K562 (cell line): ENCODE measurements at regions of chr3 and their contacts with region 1.

Region 1: DNA sequence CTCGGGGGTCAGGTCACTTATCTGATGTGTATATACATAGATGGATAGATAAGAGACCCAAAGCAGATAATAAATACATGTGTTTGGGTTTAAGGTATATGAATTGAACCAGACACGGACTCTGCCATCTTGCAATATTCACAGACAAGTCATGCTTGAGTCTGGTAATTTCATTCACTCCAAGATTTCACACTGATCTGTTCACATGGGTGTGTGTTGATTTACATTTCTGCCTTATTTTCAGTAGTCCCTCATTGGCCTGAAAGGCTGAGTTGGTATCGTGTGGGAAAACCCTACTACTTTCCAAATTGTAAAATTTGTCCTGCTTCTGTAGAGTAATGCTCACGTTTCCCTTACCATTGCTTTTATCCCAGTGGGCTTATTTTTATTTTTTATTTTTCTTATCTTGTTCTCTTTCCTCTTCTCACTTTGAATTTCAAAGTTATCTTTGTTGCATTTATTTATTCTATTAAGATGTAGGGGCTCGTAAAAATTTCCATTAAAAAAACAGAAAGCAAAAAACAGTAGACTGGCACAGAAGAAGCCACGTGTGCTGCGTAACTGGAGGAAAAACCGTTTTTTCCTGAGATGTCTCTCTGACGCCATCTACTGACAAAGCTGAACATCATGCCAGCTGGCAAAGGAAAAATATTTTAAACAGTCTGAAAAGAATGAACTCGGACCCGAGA is 10.8 kb upstream of the MFSD1 start:
- DNase-seq: peak; percentile 45 to 78 (median 52)
- ATAC-seq: peak; percentile 69
- H3K4me3 ChIP-seq: no peak overlapping the region
- H3K27ac ChIP-seq: peak overlapping the region; percentile 55; the same call in 2 of the 3 replicates
- H3K4me1 ChIP-seq: peaks cover 0 to 7% of the 10 kb centered on the region in 2 experiments; a peak in 2 of 5 replicates
- H3K27me3 ChIP-seq: no peaks in the 10 kb centered on the region
- CTCF ChIP-seq: peak; percentile 75 to 90 (median 77)
- EP300 ChIP-seq: peak; percentile 19; the same call in 1 of the 2 replicates
- POLR2A ChIP-seq: no peak
- RAD21 ChIP-seq: peak; percentile 82 to 86

Region 2: GRCh38 chr3:157532529-157533297 is 1258.3 kb before region 1 on chr3:
- CTCF ChIA-PET with region 1: no interaction called
- POLR2A ChIA-PET with region 1: no interaction called
- in situ Hi-C with region 1: no loop called
- intact Hi-C with region 1: loop called (anchors 10 kb)
- DNase-seq: peak; percentile 54 to 85 (median 63)
- ATAC-seq: peak; percentile 87
- H3K4me3 ChIP-seq: no peak overlapping the region
- H3K27ac ChIP-seq: peak overlapping the region; percentile 61
- H3K4me1 ChIP-seq: peaks cover 0 to 55% of the 10 kb centered on the region in 2 experiments; a peak in 4 of 5 replicates
- H3K27me3 ChIP-seq: no peaks in the 10 kb centered on the region
- CTCF ChIP-seq: peak; percentile 72 to 87 (median 72)
- EP300 ChIP-seq: peak; percentile 9; the same call in 1 of the 2 replicates
- POLR2A ChIP-seq: no peak
- RAD21 ChIP-seq: peak; percentile 92

Region 3: GRCh38 chr3:157865352-157866000 is 925.6 kb before region 1 on chr3:
- CTCF ChIA-PET with region 1: interaction called, 3 read pairs
- POLR2A ChIA-PET with region 1: no interaction called
- in situ Hi-C with region 1: no loop called
- intact Hi-C with region 1: loop called (anchors 2 kb)
- DNase-seq: peak; percentile 71 to 80 (median 76)
- ATAC-seq: peak; percentile 100
- H3K4me3 ChIP-seq: no peak overlapping the region
- H3K27ac ChIP-seq: no peak overlapping the region
- H3K4me1 ChIP-seq: no peaks in the 10 kb centered on the region
- H3K27me3 ChIP-seq: no peaks in the 10 kb centered on the region
- CTCF ChIP-seq: peak; percentile 80 to 94 (median 89)
- EP300 ChIP-seq: no peak
- POLR2A ChIP-seq: no peak
- RAD21 ChIP-seq: peak; percentile 93 to 94

Region 4: DNA sequence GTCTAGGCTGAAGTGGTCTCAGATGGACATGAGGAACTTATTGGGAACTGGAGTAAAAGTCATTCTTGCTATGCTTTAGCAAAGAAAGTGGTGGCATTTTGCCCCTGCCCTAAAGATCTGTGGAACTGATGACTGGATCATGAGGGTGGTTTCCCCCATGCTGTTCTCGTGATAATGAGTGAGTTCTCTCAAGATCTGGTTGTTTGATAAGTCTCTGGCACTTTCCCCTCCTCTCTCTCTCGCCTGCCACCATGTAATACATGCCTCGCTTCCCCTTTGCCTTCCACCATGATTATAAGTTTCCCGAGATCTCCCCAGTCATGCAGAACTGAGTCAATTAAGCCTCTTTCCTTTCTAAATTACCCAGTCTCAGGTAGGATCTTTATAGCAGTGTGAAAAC is 231.5 kb before region 1 on chr3:
- CTCF ChIA-PET with region 1: no interaction called
- POLR2A ChIA-PET with region 1: no interaction called
- in situ Hi-C with region 1: loop called (anchors 10 kb)
- intact Hi-C with region 1: no loop called
- DNase-seq: no peak
- ATAC-seq: no peak
- H3K4me3 ChIP-seq: no peak overlapping the region
- H3K27ac ChIP-seq: no peak overlapping the region
- H3K4me1 ChIP-seq: no peaks in the 10 kb centered on the region; a peak in 1 of 5 replicates
- H3K27me3 ChIP-seq: no peaks in the 10 kb centered on the region
- CTCF ChIP-seq: no peak
- EP300 ChIP-seq: no peak
- POLR2A ChIP-seq: no peak
- RAD21 ChIP-seq: no peak

Region 5: GRCh38 chr3:158679547-158680000 is 111.5 kb before region 1 on chr3:
- CTCF ChIA-PET with region 1: no interaction called
- POLR2A ChIA-PET with region 1: interaction called, 3 read pairs
- in situ Hi-C with region 1: no loop called
- intact Hi-C with region 1: loop called (anchors 5 kb)
- DNase-seq: peak; percentile 31 to 85 (median 54)
- ATAC-seq: peak; percentile 92
- H3K4me3 ChIP-seq: no peak overlapping the region
- H3K27ac ChIP-seq: peak overlapping the region; percentile 85
- H3K4me1 ChIP-seq: peaks cover 11 to 38% of the 10 kb centered on the region in 2 experiments
- H3K27me3 ChIP-seq: no peaks in the 10 kb centered on the region
- CTCF ChIP-seq: no peak
- EP300 ChIP-seq: peak; percentile 96
- POLR2A ChIP-seq: no peak
- RAD21 ChIP-seq: no peak

Region 6: GRCh38 chr3:159059401-159059800 is 268.4 kb after region 1 on chr3:
- CTCF ChIA-PET with region 1: no interaction called
- POLR2A ChIA-PET with region 1: no interaction called
- in situ Hi-C with region 1: no loop called
- intact Hi-C with region 1: no loop called
- DNase-seq: no peak
- ATAC-seq: no peak
- H3K4me3 ChIP-seq: no peak overlapping the region
- H3K27ac ChIP-seq: no peak overlapping the region
- H3K4me1 ChIP-seq: no peaks in the 10 kb centered on the region
- H3K27me3 ChIP-seq: no peaks in the 10 kb centered on the region
- CTCF ChIP-seq: no peak
- EP300 ChIP-seq: no peak
- POLR2A ChIP-seq: no peak
- RAD21 ChIP-seq: no peak

Region 7: DNA sequence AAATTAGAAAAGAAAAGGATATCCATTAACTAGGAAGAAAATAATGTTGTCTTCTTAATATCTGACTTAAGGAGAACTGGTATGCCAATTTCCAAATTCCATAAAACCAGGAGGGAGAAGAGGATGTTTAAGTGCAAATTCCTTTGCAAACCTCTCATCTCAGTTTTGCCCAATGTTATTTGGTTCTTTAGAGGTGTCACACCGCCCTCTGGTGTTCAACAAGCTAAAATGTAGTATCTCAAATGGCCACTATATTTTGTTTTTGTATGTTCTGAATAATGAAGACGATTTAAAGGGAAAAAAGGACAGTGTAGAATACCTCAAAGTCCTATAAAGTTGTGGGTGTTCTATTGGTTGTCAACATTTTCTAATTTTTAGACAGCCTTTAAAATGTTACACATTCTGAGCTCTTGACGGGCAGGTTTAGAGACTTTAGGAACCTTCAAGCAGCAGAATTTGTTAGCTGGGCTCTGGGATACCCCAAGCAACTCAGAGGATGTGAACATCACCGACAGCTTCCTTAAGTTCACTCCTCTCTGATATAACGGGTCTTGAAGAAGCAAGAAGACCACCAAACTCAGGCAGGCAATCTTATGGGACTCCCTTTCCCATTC is 469.1 kb after region 1 on chr3:
- CTCF ChIA-PET with region 1: interaction called, 8 read pairs
- POLR2A ChIA-PET with region 1: no interaction called
- in situ Hi-C with region 1: no loop called
- intact Hi-C with region 1: loop called (anchors 1 kb)
- DNase-seq: peak; percentile 19 to 67 (median 29)
- ATAC-seq: peak; percentile 83
- H3K4me3 ChIP-seq: no peak overlapping the region
- H3K27ac ChIP-seq: no peak overlapping the region
- H3K4me1 ChIP-seq: no peaks in the 10 kb centered on the region
- H3K27me3 ChIP-seq: no peaks in the 10 kb centered on the region
- CTCF ChIP-seq: peak; percentile 61 to 78 (median 78)
- EP300 ChIP-seq: no peak
- POLR2A ChIP-seq: no peak
- RAD21 ChIP-seq: peak; percentile 74 to 85

Region 8: DNA sequence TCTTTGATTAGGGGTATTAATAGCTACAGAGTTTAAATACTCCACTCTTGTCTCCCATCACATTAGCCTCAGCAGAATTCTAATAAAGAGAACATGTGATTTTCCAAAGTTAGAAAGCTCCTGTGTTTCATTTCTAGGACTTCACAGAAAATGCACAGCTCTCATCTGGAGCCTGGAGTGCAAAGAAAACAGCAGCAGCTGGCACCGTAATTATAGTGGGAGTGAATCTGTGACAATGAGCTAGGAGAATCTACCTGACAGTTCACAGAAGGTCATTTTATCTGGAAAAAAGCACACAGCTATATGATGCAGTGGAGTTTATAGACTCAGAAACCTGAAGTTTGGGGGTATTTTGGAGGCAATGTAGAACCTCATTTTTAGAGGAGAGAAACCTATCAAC is 1664.0 kb after region 1 on chr3:
- CTCF ChIA-PET with region 1: no interaction called
- POLR2A ChIA-PET with region 1: no interaction called
- in situ Hi-C with region 1: no loop called
- intact Hi-C with region 1: no loop called
- DNase-seq: no peak
- ATAC-seq: no peak
- H3K4me3 ChIP-seq: no peak overlapping the region
- H3K27ac ChIP-seq: no peak overlapping the region
- H3K4me1 ChIP-seq: peaks cover 22 to 31% of the 10 kb centered on the region in 2 experiments
- H3K27me3 ChIP-seq: no peaks in the 10 kb centered on the region
- CTCF ChIP-seq: no peak
- EP300 ChIP-seq: no peak
- POLR2A ChIP-seq: no peak
- RAD21 ChIP-seq: no peak